Posterior cingulate gyrus (tissue), 11 donors: ENCODE measurements at regions of chr10 and their contacts with region 1.

Region 1: DNA sequence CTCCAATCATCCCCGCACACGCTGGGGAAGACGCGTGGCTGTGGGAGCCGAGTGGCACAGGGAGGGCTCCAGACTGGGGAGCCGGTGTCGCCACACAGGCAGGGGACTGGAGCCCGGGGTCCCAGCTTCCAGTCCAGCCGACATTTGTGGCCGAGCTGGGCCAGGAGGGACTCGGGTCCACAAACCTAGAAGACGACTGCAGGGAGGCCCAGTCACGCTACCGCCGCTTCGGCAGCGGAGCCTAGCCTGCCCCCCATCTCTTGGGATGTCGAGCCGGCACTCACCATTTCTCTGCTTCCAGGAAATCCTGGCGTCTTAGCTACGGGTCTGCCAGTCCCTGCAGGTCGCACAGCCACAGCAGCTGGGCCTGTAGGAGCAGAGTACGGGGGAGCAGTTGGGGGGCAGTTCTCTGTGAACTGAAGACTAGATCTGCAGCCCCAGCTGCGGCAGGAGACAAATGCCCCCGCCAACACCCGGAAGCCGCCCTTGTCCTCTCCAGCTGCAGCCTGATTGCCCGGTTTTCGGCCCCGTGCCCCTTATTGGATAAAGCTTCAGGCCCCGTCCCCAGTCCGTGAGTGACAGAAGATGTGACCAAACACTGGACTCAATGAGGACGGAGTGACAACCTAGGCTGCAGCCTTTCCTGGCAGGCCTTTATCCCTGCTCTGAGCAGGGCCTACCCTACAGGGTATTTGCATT is 270.7 kb downstream of the ZNF33B start:
- DNase-seq: peak; percentile 42 to 98 (median 86)

Region 2: GRCh38 chr10:42351745-42352144 is 15.9 kb before region 1 on chr10:
- intact Hi-C with region 1: no loop called
- DNase-seq: no peak

Region 3: GRCh38 chr10:42782446-42783180 is 414.9 kb after region 1 on chr10 and contains the start of gene BMS1:
- intact Hi-C with region 1: loop called (anchors 10 kb)
- DNase-seq: peak; percentile 86 to 99 (median 93)